ENCODE measurements at regions of chr20 and their contacts with region 1.

Region 1: DNA sequence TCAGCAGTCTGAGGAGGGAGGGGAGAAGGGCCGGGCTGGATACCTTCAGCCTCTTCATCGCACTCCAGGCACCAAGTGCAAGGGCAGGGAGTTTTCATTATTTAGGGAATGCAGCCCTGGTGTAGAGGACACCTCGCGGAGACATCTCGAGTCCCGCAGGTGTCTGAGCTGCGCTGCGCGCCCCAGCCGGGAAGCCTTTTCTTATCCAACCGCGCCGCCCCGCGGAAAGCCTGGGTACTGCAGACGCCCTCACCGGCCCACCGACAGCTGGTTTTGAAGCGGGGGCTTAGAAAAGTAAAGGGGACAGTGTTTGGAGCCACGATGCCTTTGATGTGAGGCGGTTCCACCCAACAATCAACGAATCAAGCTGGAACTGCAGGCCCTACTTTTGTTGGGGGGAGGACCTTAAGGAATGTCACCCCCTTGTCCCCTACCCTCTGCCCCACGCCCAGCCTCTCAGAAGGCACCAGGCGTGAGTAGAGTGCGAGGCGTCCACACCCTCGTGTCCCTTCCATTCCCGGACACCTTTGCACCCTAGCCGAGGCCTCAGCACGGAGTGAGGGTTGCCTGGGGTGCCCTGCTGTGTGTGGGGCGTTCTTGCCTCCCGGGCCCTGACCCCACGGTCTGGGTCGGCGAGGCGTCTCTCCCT is 8.6 kb downstream of the NKX2-2 start:
- DNase-seq: peak; percentile 79
- ATAC-seq: peak; percentile 82

Region 2: DNA sequence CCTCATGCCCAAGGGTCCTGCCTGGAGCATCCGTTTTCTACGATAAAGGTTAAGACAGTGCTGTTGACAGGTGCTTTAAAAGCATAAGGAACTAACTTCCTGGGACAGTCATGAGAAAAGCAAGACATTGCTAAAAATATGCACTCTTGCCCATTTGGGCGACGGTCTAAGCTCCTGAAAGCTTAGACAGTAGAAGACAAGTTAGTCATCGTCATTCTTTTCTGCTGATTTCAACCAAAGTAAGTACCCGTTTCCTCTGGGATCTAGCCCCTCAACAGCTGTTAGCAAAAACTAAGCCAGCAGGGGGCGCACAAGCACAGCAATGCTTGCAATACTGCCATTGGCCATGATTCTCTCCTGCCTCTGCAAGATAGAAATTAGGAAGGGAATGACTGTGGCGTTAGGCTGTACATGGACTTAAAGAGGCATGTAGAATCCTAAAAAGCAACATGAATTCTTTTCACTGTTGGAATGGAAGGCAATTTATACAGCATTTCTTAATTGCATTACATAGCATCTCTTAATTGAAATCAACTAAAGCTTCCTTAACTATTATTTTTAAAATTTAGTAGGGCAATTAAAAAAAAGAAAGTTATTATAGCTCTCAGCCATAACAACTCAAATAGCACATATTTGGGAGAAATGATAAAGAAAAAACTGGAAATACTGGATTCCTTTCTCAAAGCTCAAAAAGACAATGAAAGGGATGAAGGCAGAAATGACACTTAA is 645.0 kb before region 1 on chr20:
- intact Hi-C with region 1: loop called (anchors 10 kb)
- DNase-seq: peak; percentile 92
- ATAC-seq: peak; percentile 83

Region 3: DNA sequence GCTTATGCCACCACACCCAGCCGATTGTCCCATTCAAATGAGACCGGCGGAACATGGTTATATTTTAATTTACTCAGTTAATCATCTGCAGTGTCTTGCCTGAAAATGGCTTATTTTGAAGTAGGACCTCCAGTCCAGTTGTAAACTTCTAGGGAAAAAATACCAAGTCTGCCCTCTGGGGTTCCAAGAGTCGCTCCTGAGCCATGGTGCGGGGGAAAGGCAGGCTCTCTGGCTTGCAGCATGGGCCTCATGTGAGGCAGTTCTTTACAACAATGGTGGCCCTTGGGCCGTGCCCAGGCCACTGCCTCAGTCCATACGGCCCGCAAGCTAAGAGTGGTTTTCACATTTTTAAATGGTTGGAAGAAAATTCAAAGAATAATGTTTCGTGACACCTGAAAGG is 264.9 kb before region 1 on chr20:
- intact Hi-C with region 1: loop called (anchors 5 kb)
- DNase-seq: no peak
- ATAC-seq: no peak

Region 4: GRCh38 chr20:21548390-21549035 is 43.2 kb after region 1 on chr20:
- intact Hi-C with region 1: no loop called
- DNase-seq: no peak
- ATAC-seq: no peak